Endothelial cell of umbilical vein (primary cell): ENCODE measurements at regions of chr1 and their contacts with region 1.

Region 1: GRCh38 chr1:59143133-59143487 is 153.8 kb upstream of the FGGY start:
- DNase-seq: peak; percentile 91
- H3K4me3 ChIP-seq: no peak overlapping the region
- H3K27ac ChIP-seq: peak overlapping the region; percentile 82
- H3K4me1 ChIP-seq: peaks cover 43% of the 10 kb centered on the region
- H3K27me3 ChIP-seq: no peaks in the 10 kb centered on the region
- CTCF ChIP-seq: no peak
- POLR2A ChIP-seq: peak; percentile 45

Region 2: DNA sequence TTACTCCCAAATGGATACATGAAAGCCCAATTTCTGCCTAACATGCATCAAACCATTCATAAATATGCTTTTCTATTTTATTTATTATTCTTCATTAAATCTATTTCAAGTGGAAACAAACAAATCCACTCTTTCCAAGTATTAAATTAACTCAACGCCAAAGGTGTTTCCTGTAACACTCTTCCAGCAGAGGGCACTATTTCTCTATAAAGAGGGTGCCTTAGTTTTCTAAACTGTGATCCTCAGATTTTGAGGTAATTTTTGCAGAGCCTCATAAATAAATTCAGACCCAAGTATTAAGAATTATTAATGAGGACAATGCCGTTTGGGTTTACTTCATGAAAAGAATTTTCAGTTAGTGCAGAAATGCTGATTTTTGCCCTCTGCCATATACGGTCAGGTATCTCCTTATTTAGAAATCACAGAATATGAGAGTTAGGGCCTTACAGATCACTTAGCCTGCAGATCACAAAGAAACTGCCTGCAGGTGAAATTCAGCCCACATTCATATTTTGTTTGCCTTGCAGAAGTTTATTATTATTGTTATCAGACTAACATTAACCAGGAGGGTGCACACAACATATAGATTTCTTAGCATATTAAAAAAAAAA is 403.1 kb before region 1 on chr1:
- CTCF ChIA-PET with region 1: interaction called, 3 read pairs
- POLR2A ChIA-PET with region 1: no interaction called
- dilution Hi-C with region 1: no loop called
- intact Hi-C with region 1: loop called (anchors 5 kb)
- DNase-seq: peak; percentile 73
- H3K4me3 ChIP-seq: no peak overlapping the region
- H3K27ac ChIP-seq: no peak overlapping the region
- H3K4me1 ChIP-seq: peaks cover 3% of the 10 kb centered on the region
- H3K27me3 ChIP-seq: no peaks in the 10 kb centered on the region
- CTCF ChIP-seq: peak; percentile 31 to 38
- POLR2A ChIP-seq: no peak

Region 3: GRCh38 chr1:59076612-59077011 is 66.5 kb before region 1 on chr1:
- CTCF ChIA-PET with region 1: interaction called, 7 read pairs
- POLR2A ChIA-PET with region 1: interaction called, 3 read pairs
- dilution Hi-C with region 1: no loop called
- intact Hi-C with region 1: loop called (anchors 1 kb)
- DNase-seq: peak; percentile 60
- H3K4me3 ChIP-seq: no peak overlapping the region
- H3K27ac ChIP-seq: no peak overlapping the region
- H3K4me1 ChIP-seq: peaks cover 13% of the 10 kb centered on the region
- H3K27me3 ChIP-seq: no peaks in the 10 kb centered on the region
- CTCF ChIP-seq: peak in 1 of 2 donors; percentile 16
- POLR2A ChIP-seq: no peak

Region 4: GRCh38 chr1:59128784-59129227 is 14.3 kb before region 1 on chr1:
- CTCF ChIA-PET with region 1: interaction called, 8 read pairs
- POLR2A ChIA-PET with region 1: no interaction called
- dilution Hi-C with region 1: no loop called
- intact Hi-C with region 1: loop called (anchors 1 kb)
- DNase-seq: peak; percentile 77
- H3K4me3 ChIP-seq: no peak overlapping the region
- H3K27ac ChIP-seq: peak overlapping the region; percentile 87
- H3K4me1 ChIP-seq: peaks cover 32% of the 10 kb centered on the region
- H3K27me3 ChIP-seq: no peaks in the 10 kb centered on the region
- CTCF ChIP-seq: no peak
- POLR2A ChIP-seq: peak; percentile 33

Region 5: GRCh38 chr1:59178339-59179187 is 35.5 kb after region 1 on chr1:
- CTCF ChIA-PET with region 1: no interaction called
- POLR2A ChIA-PET with region 1: no interaction called
- dilution Hi-C with region 1: no loop called
- intact Hi-C with region 1: no loop called
- DNase-seq: no peak
- H3K4me3 ChIP-seq: no peak overlapping the region
- H3K27ac ChIP-seq: no peak overlapping the region
- H3K4me1 ChIP-seq: peaks cover 8% of the 10 kb centered on the region
- H3K27me3 ChIP-seq: no peaks in the 10 kb centered on the region
- CTCF ChIP-seq: no peak
- POLR2A ChIP-seq: no peak

Region 6: GRCh38 chr1:59596441-59596861 is 453.3 kb after region 1 on chr1:
- CTCF ChIA-PET with region 1: interaction called, 4 read pairs
- POLR2A ChIA-PET with region 1: no interaction called
- dilution Hi-C with region 1: no loop called
- intact Hi-C with region 1: loop called (anchors 5 kb)
- DNase-seq: peak; percentile 98
- H3K4me3 ChIP-seq: no peak overlapping the region
- H3K27ac ChIP-seq: peak overlapping the region; percentile 83
- H3K4me1 ChIP-seq: peaks cover 29% of the 10 kb centered on the region
- H3K27me3 ChIP-seq: no peaks in the 10 kb centered on the region
- CTCF ChIP-seq: no peak
- POLR2A ChIP-seq: no peak